Heart right ventricle (tissue), 16 donors: ENCODE measurements at regions of chr2 and their contacts with region 1.

Region 1: GRCh38 chr2:46650556-46651001 is 171.2 kb downstream of the TMEM247 start:
- DNase-seq: peak in 1 of 2 donors; percentile 79
- ATAC-seq: peak in 7 of 8 donors; percentile 56 to 83 (median 66)
- H3K4me3 ChIP-seq: no peak overlapping the region
- H3K27ac ChIP-seq: no peak overlapping the region
- H3K4me1 ChIP-seq: peaks cover 0 to 12% (median 5%) of the 10 kb centered on the region in 9 donors
- H3K27me3 ChIP-seq: no peaks in the 10 kb centered on the region
- CTCF ChIP-seq: peak; percentile 93 to 100 (median 96)

Region 2: GRCh38 chr2:45993476-45993991 is 657.0 kb before region 1 on chr2:
- intact Hi-C with region 1: loop called in 3 of 10 experiments (anchors 5 to 10 kb)
- DNase-seq: peak in 1 of 2 donors; percentile 83
- ATAC-seq: peak; percentile 34 to 83 (median 65)
- H3K4me3 ChIP-seq: no peak overlapping the region
- H3K27ac ChIP-seq: no peak overlapping the region
- H3K4me1 ChIP-seq: peaks cover 2 to 29% (median 20%) of the 10 kb centered on the region in 9 donors
- H3K27me3 ChIP-seq: no peaks in the 10 kb centered on the region
- CTCF ChIP-seq: peak; percentile 57 to 91 (median 85)

Region 3: DNA sequence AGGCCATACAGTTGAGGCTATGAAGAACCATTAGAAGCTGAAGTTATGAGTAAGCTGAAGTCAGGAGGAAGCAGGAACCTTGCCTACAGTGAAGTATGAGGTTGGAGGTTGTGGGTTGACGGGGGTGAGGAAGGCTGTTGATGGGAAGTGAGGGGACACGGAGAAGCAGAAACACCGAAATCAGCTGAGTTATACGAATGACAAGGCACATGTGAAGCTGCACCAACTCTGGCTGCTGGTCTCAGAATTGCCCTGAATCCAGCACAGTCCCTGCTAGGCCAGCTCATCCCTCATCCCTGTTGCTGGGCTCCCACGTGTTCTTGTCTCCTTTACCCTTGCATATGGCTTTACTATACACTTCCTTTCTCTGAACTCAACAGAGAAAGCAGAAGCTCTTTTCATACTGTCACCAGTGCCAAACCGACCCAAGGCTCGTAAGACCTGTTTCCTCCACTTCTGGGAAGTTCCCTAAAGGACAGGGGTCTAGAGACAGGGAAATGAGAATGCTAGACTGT is 180.4 kb before region 1 on chr2:
- intact Hi-C with region 1: loop called in 1 of 10 experiments (anchors 1 kb)
- DNase-seq: no peak
- ATAC-seq: peak in 7 of 8 donors; percentile 33 to 77 (median 61)
- H3K4me3 ChIP-seq: no peak overlapping the region
- H3K27ac ChIP-seq: peak overlapping the region in 1 of 10 donors; percentile 57
- H3K4me1 ChIP-seq: peaks cover 0 to 19% (median 0%) of the 10 kb centered on the region in 9 donors
- H3K27me3 ChIP-seq: no peaks in the 10 kb centered on the region
- CTCF ChIP-seq: no peak

Region 4: GRCh38 chr2:46610021-46610420 is 40.6 kb before region 1 on chr2:
- intact Hi-C with region 1: no loop called
- DNase-seq: no peak
- ATAC-seq: no peak
- H3K4me3 ChIP-seq: no peak overlapping the region
- H3K27ac ChIP-seq: no peak overlapping the region
- H3K4me1 ChIP-seq: peaks cover 0 to 4% (median 0%) of the 10 kb centered on the region in 9 donors
- H3K27me3 ChIP-seq: no peaks in the 10 kb centered on the region
- CTCF ChIP-seq: no peak

Region 5: DNA sequence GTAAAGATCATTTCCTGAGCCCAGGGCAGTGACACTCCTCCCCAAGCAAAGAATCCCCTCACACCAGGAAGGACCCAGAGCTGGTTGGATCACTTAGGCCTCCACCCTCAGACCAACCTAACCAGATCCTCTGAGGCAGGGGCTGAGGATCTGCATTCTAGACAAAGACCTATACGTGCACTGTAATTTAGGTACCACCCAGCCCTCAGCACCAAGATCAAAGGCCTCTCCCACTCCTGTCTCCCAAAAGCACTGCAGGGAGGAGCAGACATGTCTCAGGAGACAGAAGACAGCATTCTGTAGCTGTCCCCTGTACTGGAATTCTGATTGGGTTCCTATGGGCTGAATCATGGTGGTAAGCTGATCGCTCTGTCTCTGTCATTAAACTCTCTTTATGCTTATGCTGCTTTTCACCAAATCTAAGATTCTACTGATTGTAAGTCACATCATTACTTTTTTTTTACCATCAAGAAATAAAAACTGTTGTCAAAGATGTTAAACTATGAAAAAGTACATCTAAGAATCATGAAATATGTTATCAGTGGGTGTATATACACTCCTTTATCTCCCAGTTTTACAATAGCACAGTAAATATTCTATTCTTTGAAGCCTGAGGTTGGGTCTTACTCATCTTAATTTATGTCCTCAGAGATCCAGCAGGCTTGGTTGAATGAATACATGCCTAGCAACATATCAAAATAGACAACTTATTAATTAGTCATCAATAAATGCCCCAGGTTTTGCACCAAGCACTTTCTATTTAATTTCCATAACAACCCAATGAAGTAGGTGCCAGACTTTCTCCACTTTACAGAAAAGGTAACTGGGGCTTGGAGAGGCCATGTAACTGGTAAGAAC is 236.7 kb after region 1 on chr2:
- intact Hi-C with region 1: loop called in 3 of 10 experiments (anchors 5 kb)
- DNase-seq: no peak
- ATAC-seq: no peak
- H3K4me3 ChIP-seq: no peak overlapping the region
- H3K27ac ChIP-seq: peak overlapping the region in 5 of 10 donors; percentile 29 to 73 (median 49)
- H3K4me1 ChIP-seq: peaks cover 0 to 40% (median 12%) of the 10 kb centered on the region in 9 donors
- H3K27me3 ChIP-seq: no peaks in the 10 kb centered on the region
- CTCF ChIP-seq: no peak